ENCODE measurements at regions of chr16 and their contacts with region 1.

Region 1: GRCh38 chr16:17348042-17348783 is 122.5 kb downstream of the XYLT1 start:
- DNase-seq: no peak
- H3K4me3 ChIP-seq: no peak overlapping the region
- H3K27me3 ChIP-seq: no peaks in the 10 kb centered on the region
- CTCF ChIP-seq: no peak

Region 2: GRCh38 chr16:17296431-17296830 is 51.8 kb before region 1 on chr16:
- CTCF ChIA-PET with region 1: no interaction called
- POLR2A ChIA-PET with region 1: interaction called, 25 read pairs
- DNase-seq: no peak
- H3K4me3 ChIP-seq: no peak overlapping the region
- H3K27me3 ChIP-seq: no peaks in the 10 kb centered on the region
- CTCF ChIP-seq: no peak